Psoas muscle (tissue), 8 donors: ENCODE measurements at regions of chr9 and their contacts with region 1.

Region 1: DNA sequence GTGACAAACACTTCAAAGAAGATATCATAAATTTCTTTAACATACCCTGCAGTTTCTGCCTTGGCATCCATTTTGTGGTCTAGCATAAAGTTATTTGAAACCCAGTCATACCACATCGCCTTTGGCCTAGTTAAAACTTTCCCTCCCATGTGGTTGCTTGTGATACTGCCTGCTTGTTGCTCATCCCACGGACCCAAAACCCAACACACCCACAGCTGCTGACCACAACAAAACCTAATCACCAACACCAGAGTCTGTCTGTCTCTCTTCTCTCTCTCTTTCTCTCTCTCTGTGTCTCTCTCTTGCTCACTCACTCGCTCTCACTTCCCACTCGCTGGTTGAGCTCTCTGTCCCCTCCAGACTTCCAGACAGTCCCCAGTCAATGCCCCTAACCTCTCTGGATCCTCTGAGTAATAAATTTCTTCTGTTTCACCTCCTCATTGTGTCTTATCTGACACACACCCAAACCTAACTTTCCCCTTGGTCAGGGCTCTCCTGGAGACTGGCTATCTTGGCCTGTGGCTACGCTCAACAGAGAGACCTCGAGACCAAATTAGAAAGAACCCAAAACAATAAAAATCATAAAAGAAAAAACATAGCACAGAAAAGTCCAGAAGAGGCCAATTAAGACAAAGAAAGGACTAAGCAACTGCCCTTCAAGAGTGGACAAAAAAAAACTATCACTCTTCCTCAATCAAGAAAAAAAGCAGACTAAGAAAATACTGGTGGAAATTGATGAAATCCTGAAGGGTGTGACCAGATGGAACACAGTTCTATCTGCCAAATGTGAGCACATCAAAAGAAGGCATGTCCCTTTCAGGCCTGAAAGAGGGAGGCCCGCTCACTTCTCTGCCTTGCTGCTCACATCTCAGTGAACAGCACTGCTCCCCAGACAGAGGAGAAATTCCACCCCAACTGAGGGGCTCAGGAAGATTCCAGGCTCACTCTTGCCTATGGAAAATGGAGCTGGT is 41.5 kb downstream of the TTLL11 start:
- DNase-seq: no peak
- ATAC-seq: peak; percentile 20 to 55 (median 24)
- H3K4me3 ChIP-seq: no peak overlapping the region
- H3K27ac ChIP-seq: no peak overlapping the region
- H3K4me1 ChIP-seq: peaks cover 41% of the 10 kb centered on the region
- H3K27me3 ChIP-seq: no peaks in the 10 kb centered on the region
- CTCF ChIP-seq: no peak

Region 2: GRCh38 chr9:122084026-122084675 is 32.5 kb after region 1 on chr9:
- intact Hi-C with region 1: loop called in 1 of 2 experiments (anchors 5 kb)
- DNase-seq: no peak
- ATAC-seq: peak; percentile 25 to 36 (median 31)
- H3K4me3 ChIP-seq: peak overlapping the region; percentile 44
- H3K27ac ChIP-seq: peak overlapping the region; percentile 94
- H3K4me1 ChIP-seq: peaks cover 65% of the 10 kb centered on the region
- H3K27me3 ChIP-seq: no peaks in the 10 kb centered on the region
- CTCF ChIP-seq: no peak

Region 3: DNA sequence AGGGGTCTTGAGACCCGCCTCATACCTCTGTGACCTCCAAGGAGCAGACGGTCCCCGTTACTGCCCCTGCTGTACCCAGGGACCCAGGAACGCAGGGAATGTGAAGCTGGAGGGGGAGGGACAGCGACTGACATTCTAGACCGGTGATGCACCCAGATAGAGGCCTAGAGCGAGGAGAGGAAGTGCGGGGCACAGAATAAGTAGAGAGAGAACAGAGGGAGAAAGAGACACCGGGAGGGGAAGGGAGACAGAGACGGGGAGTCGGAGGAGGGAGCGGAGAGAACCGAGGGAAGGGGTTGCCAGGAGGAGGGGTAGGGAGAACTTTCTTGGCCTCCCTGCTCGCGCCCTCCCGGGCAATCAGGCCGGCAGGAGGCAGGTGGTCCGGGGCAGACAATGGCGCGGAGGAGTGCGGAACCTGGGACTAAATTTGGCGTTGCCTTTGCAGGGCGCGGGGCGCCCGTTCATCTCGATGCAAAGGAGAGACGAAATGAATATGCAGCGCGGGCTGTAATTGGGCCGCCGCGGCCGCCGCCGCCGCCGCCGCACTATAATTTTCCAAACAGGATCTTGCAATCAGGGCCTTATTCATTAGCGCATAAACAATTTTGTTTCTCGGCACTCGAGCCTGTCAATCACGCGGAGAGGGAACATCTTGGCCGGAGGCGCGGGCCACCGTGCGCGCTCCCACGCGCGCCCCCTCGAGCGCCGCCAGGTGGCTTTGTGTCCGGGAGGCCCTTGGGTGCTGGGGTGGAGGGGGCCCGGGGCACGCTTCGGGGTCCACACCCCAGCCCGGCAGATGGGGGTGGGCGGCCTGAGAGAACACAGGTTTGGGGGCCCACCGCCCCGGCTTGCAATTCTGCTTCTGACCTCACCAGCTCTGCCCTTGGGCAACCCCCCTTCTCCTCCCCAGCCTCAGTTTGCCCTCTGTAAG is 75.0 kb after region 1 on chr9:
- intact Hi-C with region 1: no loop called
- DNase-seq: no peak
- ATAC-seq: no peak
- H3K4me3 ChIP-seq: peak overlapping the region; percentile 47
- H3K27ac ChIP-seq: no peak overlapping the region
- H3K4me1 ChIP-seq: peaks cover 11% of the 10 kb centered on the region
- H3K27me3 ChIP-seq: peaks cover 0 to 13% (median 0%) of the 10 kb centered on the region in 3 donors
- CTCF ChIP-seq: no peak

Region 4: GRCh38 chr9:122252796-122253195 is 201.2 kb after region 1 on chr9:
- intact Hi-C with region 1: no loop called
- DNase-seq: no peak
- ATAC-seq: no peak
- H3K4me3 ChIP-seq: no peak overlapping the region
- H3K27ac ChIP-seq: peak overlapping the region; percentile 38
- H3K4me1 ChIP-seq: peaks cover 6% of the 10 kb centered on the region
- H3K27me3 ChIP-seq: no peaks in the 10 kb centered on the region
- CTCF ChIP-seq: no peak